Ascending aorta (tissue), 2 donors: ENCODE measurements at regions of chr6 and their contacts with region 1.

Region 1: GRCh38 chr6:593139-593906 is 63.6 kb downstream of the HUS1B start:
- DNase-seq: no peak
- H3K4me3 ChIP-seq: no peak overlapping the region
- H3K27ac ChIP-seq: no peak overlapping the region
- H3K4me1 ChIP-seq: no peaks in the 10 kb centered on the region
- H3K27me3 ChIP-seq: no peaks in the 10 kb centered on the region
- CTCF ChIP-seq: peak in 2 of 3 experiments; percentile 58 to 70

Region 2: DNA sequence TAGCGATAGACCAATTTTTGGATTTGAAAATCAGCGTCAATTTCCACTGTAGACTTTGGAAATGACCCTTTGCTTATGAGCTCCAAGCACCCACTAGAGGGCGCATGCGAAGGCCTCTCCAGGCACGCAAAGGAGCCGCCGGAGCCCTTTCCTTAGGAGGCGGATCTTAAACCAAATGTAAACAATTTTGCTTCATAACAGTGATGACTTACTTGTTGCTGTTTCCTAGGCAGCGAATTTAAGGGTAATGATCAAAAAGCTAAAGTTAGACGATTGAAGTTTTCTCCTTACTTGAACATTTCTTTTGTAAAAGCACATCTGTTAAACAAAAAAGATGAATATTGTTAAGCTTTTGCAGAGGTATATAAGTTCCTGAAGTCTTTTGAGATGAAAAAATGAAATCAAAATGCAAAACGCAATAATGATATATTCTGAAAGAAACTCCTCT is 128.8 kb after region 1 on chr6:
- intact Hi-C with region 1: no loop called
- DNase-seq: peak in 1 of 2 donors; percentile 77
- H3K4me3 ChIP-seq: no peak overlapping the region
- H3K27ac ChIP-seq: no peak overlapping the region
- H3K4me1 ChIP-seq: no peaks in the 10 kb centered on the region
- H3K27me3 ChIP-seq: no peaks in the 10 kb centered on the region
- CTCF ChIP-seq: peak; percentile 49 to 84 (median 73)

Region 3: DNA sequence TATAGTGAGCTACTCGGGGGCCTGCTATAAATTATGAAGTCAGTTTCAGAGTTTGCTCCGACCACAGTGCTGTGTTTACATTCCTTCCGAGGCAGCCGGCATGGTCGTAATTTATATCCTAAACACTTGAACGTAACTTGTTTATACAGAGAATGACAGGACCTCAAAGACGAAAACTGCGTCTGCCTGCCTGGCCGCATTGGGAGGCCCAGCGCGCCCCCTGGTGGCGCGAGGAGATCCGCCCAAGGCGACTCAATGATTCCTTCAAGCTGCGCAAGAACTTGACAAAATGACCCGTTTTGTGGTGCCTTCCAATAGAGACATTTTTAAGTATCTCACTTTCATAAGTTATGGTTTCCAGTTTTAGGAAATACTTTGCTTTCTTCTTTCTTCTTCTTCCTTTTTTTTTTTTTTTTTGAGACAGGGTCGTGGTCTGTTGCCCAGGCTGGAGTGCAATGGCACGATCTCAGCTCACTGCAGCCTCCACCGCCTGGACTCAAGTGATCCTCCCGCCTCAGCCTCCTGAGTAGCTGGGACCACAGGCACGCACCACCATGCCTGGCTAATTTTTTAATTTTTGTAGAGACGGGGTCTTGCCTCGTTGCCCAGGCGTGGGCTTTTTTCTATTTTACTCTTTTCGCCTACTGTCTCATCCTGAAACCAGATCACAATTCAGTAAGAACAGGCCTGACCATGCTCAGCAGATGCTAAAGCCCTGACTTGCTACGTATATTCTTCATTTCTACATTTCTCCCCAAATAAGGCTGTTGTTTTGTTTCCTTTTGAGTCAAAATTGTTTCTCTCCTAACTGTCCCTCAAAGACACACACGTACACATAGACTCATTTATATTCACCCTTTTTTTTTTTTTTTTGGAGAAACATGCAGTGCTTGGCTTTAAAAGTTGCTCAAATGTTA is 803.9 kb after region 1 on chr6:
- intact Hi-C with region 1: loop called (anchors 5 kb)
- DNase-seq: peak in 1 of 2 donors; percentile 71
- H3K4me3 ChIP-seq: no peak overlapping the region
- H3K27ac ChIP-seq: no peak overlapping the region
- H3K4me1 ChIP-seq: peaks cover 0 to 4% of the 10 kb centered on the region in 2 donors
- H3K27me3 ChIP-seq: peaks cover 18% of the 10 kb centered on the region
- CTCF ChIP-seq: peak; percentile 62 to 90 (median 86)

Region 4: DNA sequence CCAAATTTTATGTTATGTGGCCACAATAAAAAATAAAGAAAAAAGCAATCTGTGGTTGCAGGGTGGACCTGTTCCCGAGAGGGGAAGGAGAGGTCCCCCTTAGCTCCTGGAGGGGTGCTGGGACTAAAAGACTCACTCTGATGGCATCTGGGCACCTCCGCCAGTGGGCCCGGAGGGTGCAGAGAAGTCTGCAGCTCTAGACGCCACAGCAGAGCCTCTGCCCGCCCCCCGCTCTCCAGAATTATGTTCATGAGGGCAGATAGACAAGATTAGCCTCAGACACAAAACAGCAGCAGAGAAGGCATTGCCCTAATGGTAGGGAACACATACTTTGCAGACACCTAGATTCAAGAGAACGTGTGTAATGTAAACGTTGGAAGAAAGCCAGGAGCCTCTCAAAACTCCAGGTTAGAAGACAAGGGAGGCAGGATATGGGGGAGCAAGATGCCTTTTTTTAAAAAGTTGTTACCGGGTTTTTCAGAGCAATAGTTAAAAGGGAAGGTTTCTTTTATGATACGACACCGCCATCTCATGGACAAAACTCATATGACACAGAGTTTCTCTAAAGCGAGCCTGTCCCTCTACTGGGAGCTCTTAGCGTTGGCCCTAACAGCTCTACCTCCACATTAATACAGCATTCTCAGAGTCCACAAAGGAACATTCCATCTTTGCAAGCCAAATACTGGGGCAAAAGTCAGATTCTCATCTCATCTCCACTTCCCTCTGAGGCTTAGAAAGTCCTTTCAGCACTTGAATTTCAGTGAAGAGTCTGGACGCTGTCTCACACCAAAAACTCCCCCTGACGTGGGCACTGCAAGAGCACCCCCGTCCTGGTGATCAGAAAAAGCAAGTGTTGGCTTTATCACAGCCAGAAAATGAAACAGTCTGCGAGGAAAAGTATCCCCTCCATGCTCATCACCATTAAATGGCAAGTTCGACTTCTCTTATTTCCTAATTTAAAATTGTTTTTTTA is 843.3 kb after region 1 on chr6:
- intact Hi-C with region 1: loop called (anchors 2 kb)
- DNase-seq: no peak
- H3K4me3 ChIP-seq: no peak overlapping the region
- H3K27ac ChIP-seq: no peak overlapping the region
- H3K4me1 ChIP-seq: no peaks in the 10 kb centered on the region
- H3K27me3 ChIP-seq: no peaks in the 10 kb centered on the region
- CTCF ChIP-seq: peak; percentile 57 to 78 (median 69)